Ovary (tissue), 10 donors: ENCODE measurements at regions of chr17 and their contacts with region 1.

Region 1: DNA sequence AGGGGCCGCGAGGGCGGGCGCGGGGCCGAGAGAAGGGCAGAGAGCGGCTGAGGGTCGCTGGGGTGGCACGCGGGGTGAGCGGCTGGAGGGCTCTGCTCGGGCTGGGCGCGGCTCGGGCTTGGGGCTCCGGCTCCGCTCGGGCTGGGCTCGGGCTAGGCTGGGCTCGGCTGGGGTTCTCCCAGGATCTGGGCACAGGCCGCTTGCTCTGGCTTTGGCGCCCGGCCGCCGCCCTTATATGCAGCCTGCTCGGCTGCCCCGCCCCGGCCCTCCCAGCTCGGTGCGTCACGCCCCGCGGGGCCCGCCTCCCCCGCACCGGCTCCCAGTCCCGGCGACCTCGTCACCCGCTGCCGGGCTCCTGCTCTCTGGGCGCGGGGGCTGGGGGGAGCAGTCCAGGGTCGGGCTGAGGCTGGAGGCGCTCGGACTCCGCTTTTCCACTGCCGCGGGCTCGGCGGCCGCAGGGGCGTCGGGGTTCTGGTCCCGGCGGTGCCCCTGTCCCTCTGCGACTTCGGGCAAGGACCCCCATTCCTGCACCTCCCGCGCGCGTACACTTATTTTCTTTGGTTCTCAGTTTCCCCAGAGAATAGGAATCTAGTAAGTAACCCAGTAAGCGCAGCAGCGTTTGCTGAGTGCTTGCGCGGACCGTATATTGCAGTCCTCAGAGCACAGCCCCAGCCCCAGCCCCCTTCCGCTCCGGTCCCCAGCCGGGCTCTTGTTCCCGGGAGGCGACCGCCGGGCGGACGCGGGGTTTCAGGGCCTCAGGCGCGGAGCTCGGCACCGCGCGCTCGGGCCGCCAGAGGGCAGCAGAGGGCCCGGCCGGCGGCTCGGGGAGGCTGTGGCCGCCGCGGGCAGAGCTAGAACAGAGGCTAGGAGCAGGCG is at the start of gene RASD1:
- DNase-seq: peak; percentile 88 to 96 (median 91)
- H3K4me3 ChIP-seq: peak within 1 kb of the TSS; percentile 58
- H3K27ac ChIP-seq: peak within 1 kb of the TSS in 1 of 2 donors; percentile 45
- H3K4me1 ChIP-seq: peaks cover 4% of the 10 kb centered on the region
- H3K27me3 ChIP-seq: no peaks in the 10 kb centered on the region
- CTCF ChIP-seq: peak; percentile 93 to 97 (median 95)
- EP300 ChIP-seq: no peak
- POLR2A ChIP-seq: peak; percentile 94
- total RNA-seq, gene RASD1: 2.6 to 55.9 (median 27.3) TPM

Region 2: DNA sequence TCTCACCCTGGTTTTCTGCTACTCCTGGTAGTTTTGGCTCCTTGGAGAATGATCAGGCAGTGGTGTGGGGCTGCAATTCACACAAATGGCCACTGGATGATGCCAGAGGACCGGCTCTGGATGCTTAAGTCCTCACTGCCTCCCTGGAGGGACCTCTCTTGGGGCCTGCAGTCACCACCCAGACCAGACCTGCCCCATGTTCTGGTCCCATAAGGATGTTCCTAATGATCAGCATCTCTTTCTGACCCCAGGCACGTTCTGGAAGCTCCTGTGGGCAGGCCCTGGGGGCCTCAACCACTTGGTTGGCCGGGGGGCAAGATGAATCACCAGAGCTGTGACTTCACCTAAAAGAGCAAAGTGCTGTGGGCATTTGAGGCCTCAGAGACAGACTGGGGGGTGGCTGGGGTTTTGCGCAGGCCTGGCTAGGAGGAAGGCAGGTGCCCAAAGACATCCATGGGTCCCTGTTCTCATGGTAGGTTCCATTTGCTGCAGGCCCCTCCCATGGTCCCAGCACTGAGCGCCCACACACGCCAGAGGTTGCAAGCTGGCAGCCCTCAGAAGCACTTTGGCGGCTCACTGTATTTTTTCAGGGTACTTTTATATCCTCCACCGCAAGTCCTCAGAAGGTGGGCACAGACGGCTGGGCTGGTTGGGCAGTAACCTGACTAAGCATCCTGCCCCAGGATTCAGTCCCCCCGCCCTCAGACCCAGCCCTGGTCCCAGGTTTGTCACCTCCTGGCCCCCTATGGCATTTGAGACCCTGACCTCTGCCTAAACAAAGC is 140.1 kb before region 1 on chr17:
- intact Hi-C with region 1: loop called in 2 of 4 experiments (anchors 10 kb)
- DNase-seq: peak; percentile 66 to 87 (median 78)
- H3K4me3 ChIP-seq: no peak overlapping the region
- H3K27ac ChIP-seq: no peak overlapping the region
- H3K4me1 ChIP-seq: no peaks in the 10 kb centered on the region
- H3K27me3 ChIP-seq: no peaks in the 10 kb centered on the region
- CTCF ChIP-seq: peak; percentile 90 to 97 (median 95)
- EP300 ChIP-seq: no peak
- POLR2A ChIP-seq: no peak

Region 3: GRCh38 chr17:17568749-17569195 is 72.3 kb after region 1 on chr17:
- intact Hi-C with region 1: loop called in 2 of 4 experiments (anchors 5 to 10 kb)
- DNase-seq: peak; percentile 50 to 78 (median 67)
- H3K4me3 ChIP-seq: no peak overlapping the region
- H3K27ac ChIP-seq: no peak overlapping the region
- H3K4me1 ChIP-seq: peaks cover 51% of the 10 kb centered on the region
- H3K27me3 ChIP-seq: no peaks in the 10 kb centered on the region
- CTCF ChIP-seq: peak in 2 of 3 donors; percentile 21 to 37
- EP300 ChIP-seq: no peak
- POLR2A ChIP-seq: no peak

Region 4: DNA sequence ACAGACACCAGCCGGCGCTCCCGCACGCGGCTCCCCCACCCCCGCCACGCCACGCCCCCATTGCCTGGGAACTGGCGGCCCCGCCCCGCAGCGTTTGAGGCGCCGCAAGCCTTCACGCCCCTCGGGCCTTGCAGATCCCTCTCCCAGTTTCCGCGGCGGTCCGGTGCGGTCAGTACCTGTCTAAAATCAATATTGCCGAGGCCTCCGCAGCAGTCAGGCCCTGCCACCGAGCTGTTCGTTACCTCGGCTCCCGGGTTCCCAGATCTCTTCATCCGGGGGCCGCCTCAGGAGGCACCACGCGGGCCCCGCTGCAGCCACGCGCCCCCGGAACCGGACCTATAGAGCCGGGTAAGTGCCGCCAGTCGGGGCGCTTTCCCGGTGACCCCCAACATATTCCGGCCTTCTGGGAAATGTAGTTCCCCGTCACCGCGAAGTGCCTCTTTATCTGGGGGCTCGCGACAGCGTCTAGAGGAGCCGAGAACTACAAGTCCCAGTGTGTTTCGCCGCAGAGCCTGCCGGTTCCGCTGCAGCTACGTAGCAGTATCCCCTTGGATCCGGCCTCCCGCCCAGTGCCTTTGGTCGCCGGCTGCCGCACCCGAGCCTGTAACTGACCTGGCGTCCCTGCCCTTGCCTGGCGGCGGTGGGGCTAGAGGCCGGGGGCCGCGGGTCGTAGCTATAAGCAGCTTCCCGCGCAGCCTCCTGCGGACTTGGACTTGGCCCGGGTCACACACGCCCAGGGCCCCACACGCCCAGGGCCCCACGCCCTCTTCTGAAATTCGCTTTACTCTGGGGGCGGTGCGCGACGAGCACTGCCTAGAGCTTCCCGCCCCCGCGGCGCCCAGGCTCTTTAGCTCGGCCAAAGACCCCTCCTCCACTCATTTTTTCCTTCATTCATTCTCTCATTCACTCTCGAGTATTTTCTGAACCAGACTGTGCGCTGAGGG is 95.2 kb after region 1 on chr17 and contains the start of gene PEMT:
- intact Hi-C with region 1: loop called in 2 of 4 experiments (anchors 10 kb)
- DNase-seq: peak; percentile 93 to 97 (median 94)
- H3K4me3 ChIP-seq: peak within 1 kb of the TSS; percentile 88
- H3K27ac ChIP-seq: peak within 1 kb of the TSS in 1 of 2 donors; percentile 84
- H3K4me1 ChIP-seq: peaks cover 25% of the 10 kb centered on the region
- H3K27me3 ChIP-seq: no peaks in the 10 kb centered on the region
- CTCF ChIP-seq: peak in 1 of 3 donors; percentile 47
- EP300 ChIP-seq: no peak
- POLR2A ChIP-seq: peak; percentile 56
- total RNA-seq, gene PEMT: 21.6 to 62.8 (median 36.6) TPM

Region 5: DNA sequence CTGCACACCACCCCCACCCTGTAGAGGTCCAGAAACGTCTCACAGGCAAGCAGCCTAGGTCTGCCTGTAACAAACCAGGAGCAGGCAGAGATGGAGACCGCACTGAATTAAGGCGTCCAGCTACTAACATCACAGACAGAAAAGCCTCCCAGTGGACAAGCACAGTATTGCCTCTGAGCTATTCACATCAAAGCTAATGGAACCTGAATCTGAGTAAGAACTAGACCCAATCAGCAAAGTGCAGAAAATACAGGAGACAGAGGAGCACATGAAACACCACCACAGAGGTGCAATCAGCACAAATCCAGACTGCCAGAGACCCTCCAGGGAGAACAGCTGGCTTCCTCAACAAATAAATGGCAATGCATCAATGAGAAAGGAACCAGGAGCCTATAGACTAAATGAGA is 117.3 kb after region 1 on chr17:
- intact Hi-C with region 1: loop called in 1 of 4 experiments (anchors 10 kb)
- DNase-seq: peak; percentile 39 to 69 (median 50)
- H3K4me3 ChIP-seq: no peak overlapping the region
- H3K27ac ChIP-seq: no peak overlapping the region
- H3K4me1 ChIP-seq: peaks cover 2% of the 10 kb centered on the region
- H3K27me3 ChIP-seq: no peaks in the 10 kb centered on the region
- CTCF ChIP-seq: peak; percentile 26 to 73 (median 63)
- EP300 ChIP-seq: no peak
- POLR2A ChIP-seq: no peak

Region 6: DNA sequence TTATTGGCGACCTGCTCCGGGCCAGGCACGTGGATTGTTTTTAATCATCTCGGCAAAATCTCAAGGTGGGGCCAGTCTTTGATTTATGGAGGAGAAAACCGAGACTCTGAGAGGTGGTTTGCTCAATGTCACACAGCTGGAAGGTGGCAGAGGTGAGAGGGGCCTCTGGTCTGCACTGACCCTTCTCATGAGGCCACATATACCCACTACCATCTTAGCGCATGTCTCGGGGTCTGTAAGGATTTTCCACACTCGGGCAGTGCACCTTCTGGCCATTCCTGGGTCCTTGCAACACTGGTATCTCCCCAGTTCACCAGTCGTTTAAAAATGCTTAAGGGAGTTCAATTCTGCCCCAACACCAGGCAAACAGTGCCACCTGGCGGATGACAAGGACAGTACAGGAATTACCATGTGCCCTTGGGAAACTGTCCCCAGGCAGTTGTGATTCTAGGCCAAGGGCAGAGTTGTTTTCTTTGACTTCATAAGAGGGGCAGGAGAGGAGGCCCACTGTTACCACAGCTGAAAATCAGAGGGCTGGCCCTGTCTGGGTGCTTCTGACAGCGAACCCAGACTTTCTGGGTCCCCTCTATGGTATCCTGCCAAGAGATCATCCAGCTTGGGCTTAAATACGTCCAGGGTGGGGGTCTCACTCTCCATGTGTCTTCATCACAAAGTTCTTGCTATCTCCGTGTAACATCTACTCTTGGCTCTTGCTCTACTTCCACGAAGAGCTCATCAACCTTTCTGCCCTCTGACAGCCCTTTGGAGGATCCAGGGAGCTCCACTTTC is 145.4 kb after region 1 on chr17:
- intact Hi-C with region 1: loop called in 2 of 4 experiments (anchors 2 to 10 kb)
- DNase-seq: peak; percentile 72 to 87 (median 84)
- H3K4me3 ChIP-seq: no peak overlapping the region
- H3K27ac ChIP-seq: no peak overlapping the region
- H3K4me1 ChIP-seq: no peaks in the 10 kb centered on the region
- H3K27me3 ChIP-seq: no peaks in the 10 kb centered on the region
- CTCF ChIP-seq: peak; percentile 86 to 92 (median 89)
- EP300 ChIP-seq: no peak
- POLR2A ChIP-seq: no peak